B cell (primary cell): ENCODE measurements at regions of chr20 and their contacts with region 1.

Region 1: DNA sequence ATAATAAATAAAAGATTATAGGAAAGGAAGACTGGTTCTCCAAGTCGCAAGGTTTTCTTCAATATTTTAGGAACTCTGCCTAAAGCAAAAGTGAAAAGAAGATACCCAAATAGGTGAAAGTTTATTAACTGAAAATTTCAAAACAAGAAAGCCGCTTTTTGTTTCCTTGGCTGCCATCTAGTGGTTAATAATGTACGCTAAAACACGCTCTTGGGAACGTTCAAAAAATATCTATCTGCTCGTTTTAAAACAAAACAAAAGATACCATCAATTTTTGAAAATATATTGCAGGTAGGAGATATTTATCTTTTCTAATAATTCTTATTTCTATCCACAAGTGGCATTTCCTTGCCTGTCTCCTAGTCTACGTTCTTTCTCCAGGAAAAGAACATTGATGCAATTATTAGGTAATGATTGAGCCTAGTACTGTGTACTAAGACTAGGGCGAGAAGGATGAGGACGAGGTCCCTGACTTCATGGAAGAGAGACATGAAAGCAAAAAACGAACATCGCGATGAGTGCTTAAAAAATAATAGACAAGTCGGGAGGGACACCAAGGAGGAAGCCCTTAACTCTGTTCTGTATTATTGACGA is 97.2 kb downstream of the SPTLC3 start:
- DNase-seq: peak; percentile 13
- ATAC-seq: no peak
- H3K4me3 ChIP-seq: no peak overlapping the region
- H3K4me3 Mint-ChIP-seq: no peak overlapping the region
- H3K27ac ChIP-seq: no peak overlapping the region
- H3K27ac Mint-ChIP-seq: no peak overlapping the region
- H3K4me1 ChIP-seq: no peaks in the 10 kb centered on the region
- H3K4me1 Mint-ChIP-seq: no peaks in the 10 kb centered on the region
- H3K27me3 ChIP-seq: no peaks in the 10 kb centered on the region
- H3K27me3 Mint-ChIP-seq: peaks cover 13% of the 10 kb centered on the region
- CTCF ChIP-seq: peak; percentile 60

Region 2: DNA sequence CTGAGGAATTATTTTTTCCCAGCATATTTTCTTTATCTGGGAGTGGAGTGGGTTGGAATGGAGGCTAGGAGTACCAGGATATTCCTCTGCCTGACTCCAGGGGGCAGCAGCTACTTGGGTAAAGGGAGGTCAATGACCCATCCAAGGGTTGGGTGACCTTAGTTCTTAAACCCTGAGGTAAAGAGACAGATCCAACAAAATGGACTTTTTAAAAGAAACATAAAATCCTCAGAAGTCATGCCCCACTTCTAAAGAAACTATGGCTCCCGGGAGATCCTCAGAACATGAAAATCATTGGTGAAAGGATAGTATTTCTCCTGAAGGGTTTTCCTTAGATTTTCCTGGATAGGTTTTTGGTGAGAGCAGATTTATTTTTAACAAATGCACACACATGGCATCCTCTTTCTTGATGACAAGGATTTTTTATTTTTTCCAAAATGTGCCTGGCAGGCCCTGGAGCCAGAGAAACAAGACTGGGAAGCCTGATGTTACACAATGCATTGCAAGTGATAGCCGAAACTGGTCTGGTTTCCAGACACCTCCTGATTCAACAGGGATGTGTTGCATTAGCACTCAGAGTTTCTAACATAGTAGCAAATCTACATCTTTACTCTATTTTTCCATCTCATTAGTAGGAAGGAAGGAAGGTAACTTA is 1429.2 kb before region 1 on chr20:
- CTCF ChIA-PET with region 1: no interaction called
- POLR2A ChIA-PET with region 1: no interaction called
- intact Hi-C with region 1: loop called (anchors 5 kb)
- DNase-seq: peak; percentile 4
- ATAC-seq: no peak
- H3K4me3 ChIP-seq: no peak overlapping the region
- H3K4me3 Mint-ChIP-seq: no peak overlapping the region
- H3K27ac ChIP-seq: no peak overlapping the region
- H3K27ac Mint-ChIP-seq: no peak overlapping the region
- H3K4me1 ChIP-seq: no peaks in the 10 kb centered on the region
- H3K4me1 Mint-ChIP-seq: no peaks in the 10 kb centered on the region
- H3K27me3 ChIP-seq: no peaks in the 10 kb centered on the region
- H3K27me3 Mint-ChIP-seq: no peaks in the 10 kb centered on the region
- CTCF ChIP-seq: no peak

Region 3: DNA sequence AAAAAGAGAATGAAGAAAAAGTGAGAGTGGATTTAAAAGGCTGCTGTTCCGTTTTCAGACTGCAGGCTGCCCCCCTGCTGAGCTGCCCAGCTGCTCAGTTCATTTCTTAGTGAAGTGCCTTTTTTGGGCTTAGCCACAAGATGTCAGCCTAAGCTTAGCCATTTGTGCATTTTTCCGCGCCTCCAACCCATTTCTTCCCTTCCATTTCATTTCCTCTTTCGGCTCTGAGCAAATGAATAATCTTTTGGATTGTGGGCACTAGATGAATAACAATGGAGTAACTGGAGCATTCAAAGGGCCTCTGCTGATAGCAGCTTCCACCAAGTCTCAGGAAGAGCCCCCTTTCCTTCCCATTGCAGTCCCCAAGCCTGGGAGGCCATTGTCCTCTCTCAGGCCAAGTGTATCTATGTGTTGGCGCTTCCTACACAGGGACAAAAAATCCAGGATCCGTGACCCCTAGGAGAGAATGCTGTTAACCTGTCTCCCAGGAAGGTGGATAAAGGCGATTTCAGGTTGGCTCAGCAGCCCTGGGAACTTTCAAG is 180.7 kb before region 1 on chr20:
- CTCF ChIA-PET with region 1: no interaction called
- POLR2A ChIA-PET with region 1: no interaction called
- intact Hi-C with region 1: loop called (anchors 5 kb)
- DNase-seq: peak; percentile 19
- ATAC-seq: no peak
- H3K4me3 ChIP-seq: no peak overlapping the region
- H3K4me3 Mint-ChIP-seq: no peak overlapping the region
- H3K27ac ChIP-seq: no peak overlapping the region
- H3K27ac Mint-ChIP-seq: no peak overlapping the region
- H3K4me1 ChIP-seq: no peaks in the 10 kb centered on the region
- H3K4me1 Mint-ChIP-seq: no peaks in the 10 kb centered on the region
- H3K27me3 ChIP-seq: no peaks in the 10 kb centered on the region
- H3K27me3 Mint-ChIP-seq: peaks cover 6% of the 10 kb centered on the region
- CTCF ChIP-seq: peak; percentile 30

Region 4: GRCh38 chr20:12989586-12990115 is 116.3 kb before region 1 on chr20:
- CTCF ChIA-PET with region 1: no interaction called
- POLR2A ChIA-PET with region 1: no interaction called
- intact Hi-C with region 1: no loop called
- DNase-seq: no peak
- ATAC-seq: no peak
- H3K4me3 ChIP-seq: no peak overlapping the region
- H3K4me3 Mint-ChIP-seq: no peak overlapping the region
- H3K27ac ChIP-seq: no peak overlapping the region
- H3K27ac Mint-ChIP-seq: no peak overlapping the region
- H3K4me1 ChIP-seq: no peaks in the 10 kb centered on the region
- H3K4me1 Mint-ChIP-seq: no peaks in the 10 kb centered on the region
- H3K27me3 ChIP-seq: no peaks in the 10 kb centered on the region
- H3K27me3 Mint-ChIP-seq: peaks cover 4% of the 10 kb centered on the region
- CTCF ChIP-seq: no peak